Naive thymus-derived CD4-positive, alpha-beta T cell (primary cell): ENCODE measurements at regions of chr17 and their contacts with region 1.

Region 1: DNA sequence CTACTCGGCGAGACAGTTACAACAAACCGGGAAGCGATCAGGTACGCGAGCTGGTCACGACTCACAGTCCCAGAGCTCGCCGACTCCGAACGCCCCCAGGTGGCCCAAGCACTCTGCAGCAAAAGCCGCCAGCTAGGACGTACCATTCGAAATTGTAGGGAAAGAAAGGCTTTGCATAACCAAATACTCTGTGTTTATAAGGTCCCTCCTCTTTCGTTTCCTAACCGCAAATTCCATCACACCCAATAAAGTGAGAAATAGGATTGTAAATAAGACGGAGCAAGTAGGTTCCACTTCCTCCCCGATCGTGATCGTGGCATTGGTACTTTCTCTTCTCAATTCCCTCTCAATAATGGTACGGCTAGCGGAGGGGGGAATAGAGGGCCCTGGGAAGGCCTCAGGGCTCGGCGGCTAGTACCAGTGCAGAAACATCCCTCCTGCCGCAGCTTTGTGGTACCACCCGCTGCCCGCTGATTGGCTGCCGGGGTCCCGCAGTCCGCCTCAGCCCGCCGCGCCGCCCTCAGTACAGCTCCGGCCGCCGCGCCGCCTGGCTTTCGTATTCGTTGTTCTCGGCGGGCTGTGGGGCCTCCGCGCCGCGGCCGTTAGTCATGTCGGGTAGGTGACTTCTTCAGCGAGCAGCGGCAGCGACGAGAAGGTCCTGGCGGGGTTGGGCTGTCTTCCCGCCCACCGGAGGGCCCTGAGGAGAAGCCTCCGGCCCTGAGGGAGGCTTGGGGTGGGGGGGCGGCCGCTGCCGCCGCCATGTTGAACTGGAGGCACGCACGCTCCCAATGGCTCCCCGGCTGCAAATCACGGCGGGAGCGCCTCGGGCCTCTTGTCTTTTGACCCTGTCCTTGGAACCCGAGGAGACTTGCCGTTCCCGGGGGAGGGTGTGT is at the start of gene TAF15:
- DNase-seq: peak; percentile 85 to 97 (median 97)
- ATAC-seq: peak; percentile 97
- H3K4me3 ChIP-seq: peak within 1 kb of the TSS; percentile 91
- H3K4me3 Mint-ChIP-seq: peak within 1 kb of the TSS; percentile 86 to 99 (median 96)
- H3K27ac ChIP-seq: peak within 1 kb of the TSS; percentile 83
- H3K27ac Mint-ChIP-seq: peak within 1 kb of the TSS; percentile 91 to 99 (median 97)
- H3K4me1 ChIP-seq: peaks cover 33 to 37% of the 10 kb centered on the region in 2 donors
- H3K4me1 Mint-ChIP-seq: peaks cover 31 to 68% (median 57%) of the 10 kb centered on the region in 7 donors
- H3K27me3 ChIP-seq: no peaks in the 10 kb centered on the region
- H3K27me3 Mint-ChIP-seq: no peaks in the 10 kb centered on the region
- total RNA-seq, gene TAF15: 162 to 281 (median 243) TPM

Region 2: DNA sequence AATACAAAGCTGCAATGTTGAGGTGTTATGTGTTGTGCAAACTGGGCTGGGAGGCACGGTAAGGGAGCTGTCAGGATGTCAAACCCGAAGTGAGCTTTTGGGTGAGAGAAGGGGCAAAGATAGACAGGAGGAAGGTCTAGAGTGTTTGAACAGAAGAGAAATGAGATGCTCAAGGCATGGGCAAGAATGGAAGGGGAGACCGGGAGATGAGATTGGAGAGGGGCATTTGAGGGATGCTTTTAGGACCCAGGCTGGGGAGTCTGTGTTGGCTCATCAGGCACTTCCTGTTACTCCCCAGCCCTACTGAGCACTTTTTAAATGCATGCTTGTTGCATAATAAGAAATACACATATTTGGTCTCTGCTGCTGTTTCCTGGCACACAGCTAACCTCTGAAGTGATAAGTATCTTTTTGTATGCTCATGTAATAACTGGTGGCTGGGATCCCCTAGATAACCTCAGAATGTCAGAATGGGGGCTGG is 647.9 kb before region 1 on chr17:
- CTCF ChIA-PET with region 1: no interaction called
- POLR2A ChIA-PET with region 1: interaction called, 3 read pairs
- intact Hi-C with region 1: loop called in 1 of 2 experiments (anchors 5 kb)
- DNase-seq: peak in 7 of 9 donors; percentile 31 to 68 (median 55)
- ATAC-seq: peak; percentile 77
- H3K4me3 ChIP-seq: peak overlapping the region; percentile 30
- H3K4me3 Mint-ChIP-seq: peak overlapping the region; percentile 41 to 83 (median 72)
- H3K27ac ChIP-seq: peak overlapping the region; percentile 75
- H3K27ac Mint-ChIP-seq: peak overlapping the region; percentile 65 to 96 (median 90)
- H3K4me1 ChIP-seq: peaks cover 40 to 52% of the 10 kb centered on the region in 2 donors
- H3K4me1 Mint-ChIP-seq: peaks cover 34 to 76% (median 70%) of the 10 kb centered on the region in 7 donors
- H3K27me3 ChIP-seq: no peaks in the 10 kb centered on the region
- H3K27me3 Mint-ChIP-seq: peaks cover 0 to 11% (median 0%) of the 10 kb centered on the region in 5 donors

Region 3: DNA sequence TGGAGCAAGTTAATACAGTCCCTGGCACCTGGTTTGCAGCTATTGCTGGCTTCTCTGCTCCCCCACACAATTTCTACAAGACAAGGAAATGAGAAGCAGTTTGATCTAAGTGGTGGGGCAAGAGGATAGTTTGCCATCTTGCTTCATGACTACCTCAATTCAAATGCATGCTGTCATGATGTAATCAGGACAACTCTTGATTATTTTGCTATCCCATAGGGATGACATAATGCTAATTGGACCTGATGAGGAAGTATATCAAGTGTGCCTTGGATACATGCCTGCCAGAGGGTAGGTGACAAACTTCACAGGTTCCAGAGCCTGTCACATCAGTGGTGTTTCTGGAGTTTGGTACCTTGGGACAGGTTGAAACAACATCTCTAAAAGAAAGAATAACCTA is 525.4 kb before region 1 on chr17:
- CTCF ChIA-PET with region 1: no interaction called
- POLR2A ChIA-PET with region 1: no interaction called
- intact Hi-C with region 1: no loop called
- DNase-seq: no peak
- ATAC-seq: no peak
- H3K4me3 ChIP-seq: no peak overlapping the region
- H3K4me3 Mint-ChIP-seq: no peak overlapping the region
- H3K27ac ChIP-seq: no peak overlapping the region
- H3K27ac Mint-ChIP-seq: peak overlapping the region in 1 of 9 donors; percentile 95
- H3K4me1 ChIP-seq: peaks cover 0 to 15% of the 10 kb centered on the region in 2 donors
- H3K4me1 Mint-ChIP-seq: peaks cover 16 to 45% (median 40%) of the 10 kb centered on the region in 7 donors
- H3K27me3 ChIP-seq: no peaks in the 10 kb centered on the region
- H3K27me3 Mint-ChIP-seq: peaks cover 0 to 5% (median 0%) of the 10 kb centered on the region in 5 donors

Region 4: DNA sequence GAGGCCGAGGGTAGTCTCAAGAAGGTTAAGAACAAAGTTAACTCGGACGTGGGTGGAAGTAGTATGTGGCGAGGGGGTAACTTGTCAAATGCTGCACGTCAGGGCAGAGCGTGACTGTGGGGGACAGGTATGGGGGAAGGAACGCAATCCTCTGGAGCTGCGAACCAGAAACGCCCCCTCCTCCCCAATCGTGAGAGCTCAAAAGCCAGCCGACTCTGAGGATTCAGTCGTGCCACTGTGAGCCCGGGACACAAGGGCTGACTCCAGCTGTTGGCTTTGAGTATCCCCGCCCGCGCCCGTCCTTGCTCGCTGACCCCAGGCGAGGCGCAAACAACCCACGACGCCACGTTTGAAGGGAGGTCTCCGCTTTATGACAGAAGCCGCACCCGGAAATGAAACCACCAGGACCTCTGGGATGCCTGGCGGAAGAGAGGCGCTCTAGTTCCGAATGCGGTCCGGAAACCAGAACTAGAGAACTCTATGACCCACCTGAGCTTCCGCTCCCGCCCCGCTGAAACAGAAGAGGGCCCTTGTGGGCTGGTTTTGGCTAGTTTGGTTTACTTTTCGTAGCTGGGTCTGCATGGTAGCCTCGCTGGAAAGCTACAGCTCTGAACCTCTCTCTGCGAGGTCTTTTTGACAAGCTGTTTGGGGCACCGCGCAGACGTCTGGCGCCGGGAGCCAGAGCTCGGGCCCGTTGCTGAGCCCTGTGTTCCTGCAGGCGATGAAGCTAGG is 230.8 kb before region 1 on chr17 and contains the start of gene PEX12:
- CTCF ChIA-PET with region 1: interaction called, 6 read pairs
- POLR2A ChIA-PET with region 1: interaction called, 13 read pairs
- intact Hi-C with region 1: no loop called
- DNase-seq: peak; percentile 62 to 94 (median 89)
- ATAC-seq: peak; percentile 99
- H3K4me3 ChIP-seq: peak within 1 kb of the TSS; percentile 86
- H3K4me3 Mint-ChIP-seq: peak within 1 kb of the TSS; percentile 92 to 100 (median 97)
- H3K27ac ChIP-seq: peak within 1 kb of the TSS; percentile 92
- H3K27ac Mint-ChIP-seq: peak within 1 kb of the TSS; percentile 96 to 100 (median 99)
- H3K4me1 ChIP-seq: peaks cover 5 to 12% of the 10 kb centered on the region in 2 donors
- H3K4me1 Mint-ChIP-seq: peaks cover 6 to 40% (median 32%) of the 10 kb centered on the region in 7 donors
- H3K27me3 ChIP-seq: no peaks in the 10 kb centered on the region
- H3K27me3 Mint-ChIP-seq: peaks cover 0 to 2% (median 0%) of the 10 kb centered on the region in 5 donors
- total RNA-seq, gene PEX12: 2.9 to 8.0 (median 5.3) TPM

Region 5: DNA sequence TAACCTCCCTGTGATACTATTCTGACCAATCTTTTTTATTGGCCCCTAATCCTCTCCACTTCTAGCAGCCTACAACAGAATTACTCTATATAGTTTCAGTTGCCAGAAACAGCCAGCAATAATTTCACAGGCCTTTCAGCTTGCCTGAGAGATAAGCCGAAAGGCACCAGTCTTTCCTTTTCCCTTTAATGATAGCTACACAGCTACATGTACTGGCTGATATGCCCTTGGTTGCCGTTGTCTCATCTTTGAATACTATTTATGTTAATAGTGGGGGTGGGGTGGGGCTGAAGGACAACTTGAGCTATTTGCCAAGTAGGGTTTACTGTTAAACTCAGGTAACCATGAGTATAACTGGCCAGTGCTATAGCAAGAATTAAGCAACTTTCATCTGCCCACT is 113.6 kb before region 1 on chr17:
- CTCF ChIA-PET with region 1: no interaction called
- POLR2A ChIA-PET with region 1: no interaction called
- intact Hi-C with region 1: no loop called
- DNase-seq: no peak
- ATAC-seq: no peak
- H3K4me3 ChIP-seq: no peak overlapping the region
- H3K4me3 Mint-ChIP-seq: no peak overlapping the region
- H3K27ac ChIP-seq: no peak overlapping the region
- H3K27ac Mint-ChIP-seq: no peak overlapping the region
- H3K4me1 ChIP-seq: no peaks in the 10 kb centered on the region
- H3K4me1 Mint-ChIP-seq: peaks cover 0 to 13% (median 0%) of the 10 kb centered on the region in 7 donors
- H3K27me3 ChIP-seq: no peaks in the 10 kb centered on the region
- H3K27me3 Mint-ChIP-seq: no peaks in the 10 kb centered on the region

Region 6: GRCh38 chr17:35764123-35764991 is 44.9 kb before region 1 on chr17:
- CTCF ChIA-PET with region 1: interaction called, 222 read pairs
- POLR2A ChIA-PET with region 1: interaction called, 108 read pairs
- intact Hi-C with region 1: loop called (anchors 1 kb)
- DNase-seq: peak; percentile 70 to 92 (median 81)
- ATAC-seq: peak; percentile 90
- H3K4me3 ChIP-seq: peak overlapping the region; percentile 92
- H3K4me3 Mint-ChIP-seq: peak overlapping the region; percentile 90 to 99 (median 93)
- H3K27ac ChIP-seq: peak overlapping the region; percentile 50
- H3K27ac Mint-ChIP-seq: peak overlapping the region; percentile 41 to 88 (median 79)
- H3K4me1 ChIP-seq: peaks cover 0 to 9% of the 10 kb centered on the region in 2 donors
- H3K4me1 Mint-ChIP-seq: peaks cover 0 to 10% (median 8%) of the 10 kb centered on the region in 7 donors
- H3K27me3 ChIP-seq: no peaks in the 10 kb centered on the region
- H3K27me3 Mint-ChIP-seq: peaks cover 0 to 21% (median 0%) of the 10 kb centered on the region in 5 donors

Region 7: DNA sequence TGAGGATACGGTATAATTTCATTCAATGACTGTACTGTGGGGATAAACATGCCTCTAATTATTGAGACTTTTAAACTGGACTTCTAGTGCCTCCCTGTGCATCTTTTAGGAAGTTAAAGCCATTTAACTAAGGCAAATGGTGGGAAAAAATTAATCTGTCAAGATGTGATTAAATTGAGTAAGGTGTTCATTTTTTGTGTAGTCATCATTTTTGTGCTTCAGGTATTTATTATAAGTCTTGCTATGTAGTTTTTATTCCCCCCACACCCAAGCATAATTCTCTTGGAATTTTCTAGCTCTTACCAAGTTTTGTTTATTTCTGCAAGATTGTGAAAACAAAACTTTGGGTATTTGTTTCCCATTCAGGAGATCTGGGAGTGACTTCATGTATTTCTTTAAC is 10.2 kb after region 1 on chr17:
- CTCF ChIA-PET with region 1: interaction called, 5 read pairs
- POLR2A ChIA-PET with region 1: interaction called, 13 read pairs
- intact Hi-C with region 1: loop called in 1 of 2 experiments (anchors 1 kb)
- DNase-seq: no peak
- ATAC-seq: no peak
- H3K4me3 ChIP-seq: no peak overlapping the region
- H3K4me3 Mint-ChIP-seq: no peak overlapping the region
- H3K27ac ChIP-seq: no peak overlapping the region
- H3K27ac Mint-ChIP-seq: peak overlapping the region in 3 of 9 donors; percentile 17 to 62 (median 25)
- H3K4me1 ChIP-seq: peaks cover 3 to 16% of the 10 kb centered on the region in 2 donors
- H3K4me1 Mint-ChIP-seq: peaks cover 27 to 57% (median 48%) of the 10 kb centered on the region in 7 donors
- H3K27me3 ChIP-seq: no peaks in the 10 kb centered on the region
- H3K27me3 Mint-ChIP-seq: no peaks in the 10 kb centered on the region

Region 8: DNA sequence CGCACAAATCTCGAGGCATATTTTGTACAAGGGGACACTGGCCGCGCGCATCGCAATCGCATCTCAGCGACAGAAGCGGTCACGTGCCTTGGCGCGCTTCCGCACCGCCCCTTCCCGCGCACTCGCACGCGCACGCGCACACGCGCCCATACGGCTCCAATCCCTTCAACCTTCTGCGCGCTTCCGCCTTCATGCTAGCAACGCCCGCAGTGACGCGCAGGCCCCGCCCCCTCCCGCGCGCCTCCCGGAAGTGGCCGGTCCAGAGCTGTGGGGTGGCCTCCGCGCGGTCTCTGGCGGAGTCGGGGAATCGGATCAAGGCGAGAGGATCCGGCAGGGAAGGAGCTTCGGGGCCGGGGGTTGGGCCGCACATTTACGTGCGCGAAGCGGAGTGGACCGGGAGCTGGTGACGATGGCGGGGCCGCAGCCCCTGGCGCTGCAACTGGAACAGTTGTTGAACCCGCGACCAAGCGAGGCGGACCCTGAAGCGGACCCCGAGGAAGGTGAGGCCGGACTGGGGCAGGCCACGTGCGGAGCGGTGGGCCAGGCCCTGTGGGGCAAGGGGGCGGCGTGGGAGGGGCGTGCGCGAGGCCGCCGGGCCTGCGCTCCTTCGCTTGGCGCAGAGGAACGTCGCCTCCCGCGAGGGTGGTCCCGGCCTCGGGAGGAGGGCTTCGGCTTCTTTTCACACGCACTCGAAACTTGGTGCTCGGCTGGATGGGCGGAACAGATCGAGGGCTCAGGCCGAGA is 1139.7 kb after region 1 on chr17 and contains the start of gene AATF:
- CTCF ChIA-PET with region 1: no interaction called
- POLR2A ChIA-PET with region 1: no interaction called
- intact Hi-C with region 1: loop called in 1 of 2 experiments (anchors 5 kb)
- DNase-seq: peak; percentile 93 to 99 (median 97)
- ATAC-seq: peak; percentile 99
- H3K4me3 ChIP-seq: peak within 1 kb of the TSS; percentile 69
- H3K4me3 Mint-ChIP-seq: peak within 1 kb of the TSS; percentile 91 to 99 (median 95)
- H3K27ac ChIP-seq: peak within 1 kb of the TSS; percentile 85
- H3K27ac Mint-ChIP-seq: peak within 1 kb of the TSS; percentile 91 to 97 (median 94)
- H3K4me1 ChIP-seq: peaks cover 21 to 33% of the 10 kb centered on the region in 2 donors
- H3K4me1 Mint-ChIP-seq: peaks cover 43 to 60% (median 51%) of the 10 kb centered on the region in 7 donors
- H3K27me3 ChIP-seq: peaks cover 7 to 18% of the 10 kb centered on the region in 2 donors
- H3K27me3 Mint-ChIP-seq: peaks cover 26 to 45% (median 34%) of the 10 kb centered on the region in 5 donors
- total RNA-seq, gene AATF: 39.7 to 70.8 (median 58.7) TPM